CD4-positive, alpha-beta memory T cell (primary cell): ENCODE measurements at regions of chr6 and their contacts with region 1.

Region 1: GRCh38 chr6:31739639-31740396 is at the start of gene MSH5:
- DNase-seq: peak; percentile 92 to 97 (median 94)
- H3K4me3 ChIP-seq: peak within 1 kb of the TSS; percentile 82
- H3K4me3 Mint-ChIP-seq: peak within 1 kb of the TSS; percentile 89 to 99 (median 98)
- H3K27ac ChIP-seq: peak within 1 kb of the TSS; percentile 64
- H3K27ac Mint-ChIP-seq: peak within 1 kb of the TSS; percentile 94 to 97 (median 95)
- H3K4me1 ChIP-seq: peaks cover 42% of the 10 kb centered on the region
- H3K4me1 Mint-ChIP-seq: peaks cover 33 to 64% (median 51%) of the 10 kb centered on the region in 4 donors
- H3K27me3 ChIP-seq: no peaks in the 10 kb centered on the region
- H3K27me3 Mint-ChIP-seq: no peaks in the 10 kb centered on the region
- total RNA-seq, gene MSH5: 11.4 to 12.1 TPM

Region 2: GRCh38 chr6:31680840-31681671 is 58.8 kb before region 1 on chr6 and contains the start of gene LY6G5C:
- CTCF ChIA-PET with region 1: interaction called, 4 read pairs
- POLR2A ChIA-PET with region 1: no interaction called
- intact Hi-C with region 1: loop called (anchors 5 kb)
- DNase-seq: peak in 4 of 5 donors; percentile 51 to 59 (median 56)
- H3K4me3 ChIP-seq: peak within 1 kb of the TSS; percentile 69 to 70
- H3K4me3 Mint-ChIP-seq: peak within 1 kb of the TSS; percentile 86 to 91 (median 90)
- H3K27ac ChIP-seq: peak within 1 kb of the TSS; percentile 51
- H3K27ac Mint-ChIP-seq: peak within 1 kb of the TSS; percentile 77 to 92 (median 86)
- H3K4me1 ChIP-seq: peaks cover 19% of the 10 kb centered on the region
- H3K4me1 Mint-ChIP-seq: peaks cover 11 to 27% (median 16%) of the 10 kb centered on the region in 4 donors
- H3K27me3 ChIP-seq: no peaks in the 10 kb centered on the region
- H3K27me3 Mint-ChIP-seq: no peaks in the 10 kb centered on the region
- total RNA-seq, gene LY6G5C: 4.4 to 4.5 TPM

Region 3: DNA sequence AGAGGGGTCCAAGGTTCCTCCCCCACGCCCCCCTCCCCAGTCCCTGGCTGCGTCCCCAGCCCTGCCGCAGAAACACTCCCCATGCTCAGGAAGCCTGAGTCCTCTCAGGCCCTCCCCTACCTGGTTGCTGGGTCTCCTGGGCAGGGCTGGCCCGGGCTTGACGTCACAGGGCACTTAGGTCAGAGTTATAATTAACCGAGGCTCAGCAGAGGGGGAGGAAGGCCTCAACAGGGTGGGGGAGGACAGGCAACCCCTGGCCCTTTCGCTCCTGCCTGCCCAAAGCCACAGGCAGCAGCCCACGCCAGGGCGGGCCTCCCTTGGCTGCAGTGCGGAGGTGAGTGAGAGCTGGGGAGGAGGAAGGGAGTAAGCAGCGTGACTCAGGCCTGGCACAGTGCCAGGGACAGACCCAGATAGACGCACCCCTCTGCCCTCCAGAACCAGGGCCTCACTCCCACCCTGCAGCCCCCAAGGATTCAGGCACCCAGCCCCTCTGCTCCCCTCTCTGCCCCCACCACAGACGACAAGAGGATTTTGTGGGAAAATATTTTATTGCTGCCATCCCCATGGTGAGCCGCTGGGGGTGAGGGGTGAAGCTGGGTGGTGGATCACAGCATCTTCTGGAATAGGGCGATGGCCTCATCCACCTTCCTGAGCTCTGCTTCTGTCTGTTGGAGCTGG is 37.3 kb after region 1 on chr6 and contains the start of gene VWA7:
- CTCF ChIA-PET with region 1: interaction called, 173 read pairs
- POLR2A ChIA-PET with region 1: interaction called, 78 read pairs
- intact Hi-C with region 1: loop called (anchors 2 kb)
- DNase-seq: peak; percentile 49 to 88 (median 62)
- H3K4me3 ChIP-seq: peak within 1 kb of the TSS in 1 of 2 donors; percentile 30
- H3K4me3 Mint-ChIP-seq: peak within 1 kb of the TSS; percentile 27 to 75 (median 58)
- H3K27ac ChIP-seq: peak within 1 kb of the TSS; percentile 46
- H3K27ac Mint-ChIP-seq: peak within 1 kb of the TSS; percentile 57 to 87 (median 77)
- H3K4me1 ChIP-seq: peaks cover 44% of the 10 kb centered on the region
- H3K4me1 Mint-ChIP-seq: peaks cover 13 to 44% (median 31%) of the 10 kb centered on the region in 4 donors
- H3K27me3 ChIP-seq: no peaks in the 10 kb centered on the region
- H3K27me3 Mint-ChIP-seq: no peaks in the 10 kb centered on the region
- total RNA-seq, gene VWA7: 1.0 to 1.7 TPM

Region 4: GRCh38 chr6:31806465-31807272 is 66.9 kb after region 1 on chr6 and contains the start of gene LSM2:
- CTCF ChIA-PET with region 1: interaction called, 7 read pairs
- POLR2A ChIA-PET with region 1: interaction called, 63 read pairs
- intact Hi-C with region 1: no loop called
- DNase-seq: peak; percentile 97 to 98 (median 97)
- H3K4me3 ChIP-seq: peak within 1 kb of the TSS; percentile 84 to 89
- H3K4me3 Mint-ChIP-seq: peak within 1 kb of the TSS; percentile 86 to 97 (median 90)
- H3K27ac ChIP-seq: peak within 1 kb of the TSS; percentile 80
- H3K27ac Mint-ChIP-seq: peak within 1 kb of the TSS; percentile 89 to 97 (median 93)
- H3K4me1 ChIP-seq: peaks cover 23% of the 10 kb centered on the region
- H3K4me1 Mint-ChIP-seq: peaks cover 11 to 37% (median 27%) of the 10 kb centered on the region in 4 donors
- H3K27me3 ChIP-seq: no peaks in the 10 kb centered on the region
- H3K27me3 Mint-ChIP-seq: no peaks in the 10 kb centered on the region
- total RNA-seq, gene LSM2: 30.0 to 34.6 TPM

Region 5: GRCh38 chr6:31834434-31835198 is 94.8 kb after region 1 on chr6:
- CTCF ChIA-PET with region 1: interaction called, 26 read pairs
- POLR2A ChIA-PET with region 1: interaction called, 31 read pairs
- intact Hi-C with region 1: no loop called
- DNase-seq: peak; percentile 80 to 84 (median 81)
- H3K4me3 ChIP-seq: peak overlapping the region; percentile 75 to 88
- H3K4me3 Mint-ChIP-seq: peak overlapping the region; percentile 88 to 99 (median 96)
- H3K27ac ChIP-seq: peak overlapping the region; percentile 88
- H3K27ac Mint-ChIP-seq: peak overlapping the region; percentile 97 to 99 (median 99)
- H3K4me1 ChIP-seq: peaks cover 61% of the 10 kb centered on the region
- H3K4me1 Mint-ChIP-seq: peaks cover 27 to 65% (median 48%) of the 10 kb centered on the region in 4 donors
- H3K27me3 ChIP-seq: no peaks in the 10 kb centered on the region
- H3K27me3 Mint-ChIP-seq: no peaks in the 10 kb centered on the region

Region 6: DNA sequence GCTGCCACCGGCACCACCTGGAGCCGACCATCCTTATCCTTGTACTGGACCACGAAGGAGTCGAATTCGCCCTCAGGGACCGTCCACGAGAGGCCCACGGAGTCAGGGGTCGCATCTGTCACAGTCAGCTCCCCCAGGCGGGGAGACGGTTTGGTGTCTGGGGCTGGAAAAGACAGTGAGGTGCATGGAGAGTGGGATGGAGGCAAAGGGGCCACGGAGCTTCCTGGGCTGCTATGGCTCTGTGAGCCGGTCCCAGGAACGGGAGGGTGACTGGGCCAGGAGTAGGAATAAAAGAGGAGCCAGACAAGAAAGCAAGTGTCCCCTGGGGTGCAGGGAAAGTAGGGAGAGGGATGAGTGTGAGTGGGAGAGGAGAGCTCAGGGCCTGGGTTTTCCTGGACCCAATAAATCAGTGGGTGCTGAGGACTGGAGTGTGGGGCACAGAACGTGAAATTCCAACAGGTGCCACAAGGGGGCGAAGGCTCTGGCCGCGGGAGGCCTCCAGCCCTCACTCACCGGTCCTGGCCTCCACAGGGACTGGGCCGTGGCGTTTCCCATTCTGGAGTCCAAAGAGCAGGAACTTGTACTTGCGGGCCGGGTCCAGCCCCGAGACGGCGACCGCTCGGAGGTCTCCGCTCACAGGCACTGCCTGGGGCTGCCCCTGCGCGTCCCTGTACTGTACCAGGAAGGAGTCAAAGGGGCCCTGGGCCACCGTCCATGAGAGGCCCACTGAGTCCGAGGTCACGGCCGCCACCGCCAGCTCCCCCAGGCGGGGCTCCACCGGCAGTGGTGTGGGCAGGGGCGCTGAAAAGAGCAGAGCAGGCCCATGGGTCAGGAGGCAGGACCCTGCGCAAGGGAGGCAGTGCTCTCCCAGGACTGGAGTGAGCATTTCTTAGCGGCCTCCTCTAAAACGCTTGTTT is 308.3 kb after region 1 on chr6:
- CTCF ChIA-PET with region 1: no interaction called
- POLR2A ChIA-PET with region 1: no interaction called
- intact Hi-C with region 1: no loop called
- DNase-seq: peak in 4 of 5 donors; percentile 52 to 65 (median 56)
- H3K4me3 ChIP-seq: no peak overlapping the region
- H3K4me3 Mint-ChIP-seq: peak overlapping the region in 1 of 8 donors; percentile 64
- H3K27ac ChIP-seq: no peak overlapping the region
- H3K27ac Mint-ChIP-seq: peak overlapping the region in 1 of 7 donors; percentile 43
- H3K4me1 ChIP-seq: peaks cover 10% of the 10 kb centered on the region
- H3K4me1 Mint-ChIP-seq: peaks cover 3 to 8% (median 5%) of the 10 kb centered on the region in 4 donors
- H3K27me3 ChIP-seq: no peaks in the 10 kb centered on the region
- H3K27me3 Mint-ChIP-seq: peaks cover 0 to 5% of the 10 kb centered on the region in 2 donors